ENCODE measurements at regions of chr12 and their contacts with region 1.

Region 1: GRCh38 chr12:53065975-53066931 is 12.9 kb downstream of the SPRYD3 start:
- DNase-seq: peak in 9 of 10 donors; percentile 65 to 96 (median 81)

Region 2: DNA sequence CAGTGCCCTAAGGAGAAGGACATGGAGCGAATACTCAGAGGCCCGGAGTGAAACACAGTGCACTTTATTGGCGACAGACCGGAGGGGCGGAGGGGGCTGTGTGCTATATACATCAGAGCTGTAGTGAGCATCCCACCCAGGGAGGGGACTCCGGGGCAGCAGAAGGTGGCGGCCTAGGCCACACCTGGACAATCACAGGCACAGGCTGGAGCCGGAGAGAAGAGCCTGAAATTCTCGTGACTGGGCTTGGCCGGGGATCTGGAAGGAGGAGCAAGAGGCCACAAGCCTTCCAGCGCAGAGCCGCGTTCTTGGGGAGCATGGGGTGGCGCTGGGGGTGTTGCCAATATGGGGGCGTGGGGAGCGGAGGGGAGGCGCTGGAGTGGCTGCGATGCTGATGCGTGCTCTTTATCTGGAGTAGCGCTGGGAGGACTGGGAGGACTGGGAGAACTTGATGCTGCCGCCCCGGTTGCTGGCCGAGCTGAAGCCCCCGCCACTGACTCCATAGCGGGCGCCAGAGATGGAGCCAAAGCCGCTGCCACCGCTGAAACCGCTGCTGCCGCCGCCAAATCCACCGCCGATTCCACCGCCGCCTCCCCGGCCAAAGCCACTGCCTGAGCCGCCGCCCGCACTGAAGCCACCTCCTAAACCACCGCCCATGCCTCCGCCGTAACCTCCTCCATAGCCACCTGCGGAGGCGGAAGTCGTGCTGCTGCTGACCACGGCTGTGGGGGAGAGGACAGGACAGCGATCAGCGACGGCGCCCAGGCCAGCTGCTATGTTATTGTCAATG is 276.4 kb before region 1 on chr12:
- intact Hi-C with region 1: no loop called
- DNase-seq: peak in 4 of 10 donors; percentile 22 to 85 (median 51)

Region 3: DNA sequence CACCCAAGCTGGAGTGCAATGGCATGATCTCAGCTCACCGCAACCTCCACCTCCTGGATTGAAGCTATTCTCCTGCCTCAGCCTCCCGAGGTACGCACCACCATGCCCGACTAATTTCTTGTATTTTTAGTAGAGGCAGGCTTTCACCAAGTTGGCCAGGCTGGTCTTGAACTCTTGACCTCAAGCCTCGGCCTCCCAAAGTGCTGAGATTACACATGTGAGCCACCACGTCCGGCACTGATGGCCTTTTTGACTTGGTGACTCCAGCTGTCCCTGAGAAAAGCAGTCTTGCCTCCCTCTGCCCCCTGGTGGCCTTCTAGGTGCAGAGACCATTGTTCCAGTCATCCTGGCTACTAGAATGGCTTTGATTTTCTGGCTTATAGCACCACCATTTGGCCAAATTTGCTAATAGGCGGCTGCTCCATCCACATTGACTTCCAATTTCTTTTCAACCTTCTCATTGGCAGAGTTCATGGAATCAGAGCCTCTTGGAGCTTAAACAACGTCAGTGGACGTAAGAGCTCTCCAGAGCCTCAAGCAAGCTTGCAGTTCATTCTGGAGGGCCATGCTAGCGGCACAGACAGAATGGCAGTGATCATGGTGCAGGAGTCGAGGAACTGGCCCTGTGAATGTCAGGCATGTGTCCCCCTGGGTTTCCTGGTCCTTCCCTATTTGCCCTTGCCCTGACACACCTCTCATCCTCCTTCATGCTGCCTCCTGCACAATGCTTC is 85.4 kb before region 1 on chr12:
- intact Hi-C with region 1: no loop called
- DNase-seq: peak; percentile 69 to 97 (median 84)

Region 4: DNA sequence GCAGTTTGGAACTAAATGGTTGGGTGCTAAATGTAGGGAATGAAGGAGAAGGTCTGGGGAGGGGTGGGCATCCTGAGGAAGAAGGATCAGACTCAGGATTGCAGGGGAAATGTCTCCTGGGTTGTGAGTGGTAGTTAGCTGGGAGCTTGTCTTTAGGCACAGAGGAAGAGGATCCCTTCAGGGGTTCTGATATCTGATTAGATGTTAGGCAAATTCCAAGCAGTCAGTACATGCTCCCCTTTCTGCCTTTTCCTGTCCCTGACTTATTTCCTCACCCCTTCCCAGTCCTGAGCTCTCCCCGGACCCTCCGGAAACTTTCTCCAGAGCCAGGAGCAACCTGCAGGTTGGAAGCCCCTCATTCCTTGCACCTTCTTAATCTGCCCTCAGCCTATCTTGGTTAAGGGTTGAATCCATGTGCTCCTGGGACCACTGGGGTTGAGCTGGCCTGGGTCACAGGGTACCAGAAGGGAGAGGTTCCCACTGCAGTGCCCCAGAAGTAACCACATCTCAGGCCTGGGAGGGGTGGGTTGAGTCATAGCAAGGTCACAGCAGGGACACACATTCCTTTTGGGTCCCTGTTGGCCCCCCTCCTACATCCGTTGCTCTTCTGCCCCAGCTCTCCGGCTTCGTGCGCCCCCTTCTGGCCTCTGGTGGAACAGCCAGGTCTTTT is 32.9 kb after region 1 on chr12:
- intact Hi-C with region 1: loop called (anchors 1 kb)
- DNase-seq: peak; percentile 73 to 97 (median 90)

Region 5: GRCh38 chr12:53180220-53180930 is 114.1 kb after region 1 on chr12 and contains the starts of genes CSAD and ZNF740:
- intact Hi-C with region 1: loop called (anchors 5 kb)
- DNase-seq: peak; percentile 97 to 100 (median 98)

Region 6: GRCh38 chr12:53198486-53199110 is 132.3 kb after region 1 on chr12:
- intact Hi-C with region 1: loop called (anchors 5 kb)
- DNase-seq: no peak

Measured in posterior cingulate gyrus (tissue), 11 donors.